Naive thymus-derived CD4-positive, alpha-beta T cell (primary cell): ENCODE measurements at regions of chr7 and their contacts with region 1.

Region 1: DNA sequence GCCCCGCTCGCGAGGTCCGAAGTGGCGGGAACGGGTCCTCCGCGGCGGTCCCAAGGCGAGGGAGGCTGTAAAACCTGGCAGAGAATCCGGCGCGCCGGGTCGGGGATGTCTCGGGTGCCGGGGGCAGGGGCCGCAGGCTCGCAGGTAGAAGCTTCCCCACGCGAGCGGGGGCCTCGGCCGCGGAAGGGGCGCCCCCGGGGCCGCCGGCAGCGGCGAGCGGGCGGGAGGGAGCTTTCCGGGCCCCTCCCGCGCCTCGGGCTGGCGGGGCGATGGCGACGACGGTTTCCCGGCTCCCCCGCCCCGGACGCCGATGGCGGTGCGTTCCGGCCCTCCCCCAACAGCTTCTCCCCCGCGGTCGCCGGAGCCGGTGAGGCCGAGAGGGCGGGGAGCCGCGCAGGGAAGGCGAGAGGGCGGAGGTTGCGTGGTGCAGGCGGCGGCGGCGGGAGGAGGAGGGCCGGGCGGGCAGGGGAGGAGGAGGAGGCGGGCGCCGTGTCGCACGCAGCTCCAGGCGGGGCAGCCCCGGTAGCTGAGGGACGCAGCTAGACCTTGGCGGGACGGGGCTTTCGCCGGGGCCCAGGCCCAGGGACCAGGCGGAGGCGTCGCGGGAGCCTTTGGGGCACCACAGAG is at the start of gene CUL1:
- DNase-seq: peak; percentile 74 to 85 (median 81)
- ATAC-seq: peak; percentile 89
- H3K4me3 ChIP-seq: peak within 1 kb of the TSS; percentile 80
- H3K4me3 Mint-ChIP-seq: peak within 1 kb of the TSS; percentile 85 to 99 (median 93)
- H3K27ac ChIP-seq: peak within 1 kb of the TSS; percentile 93
- H3K27ac Mint-ChIP-seq: peak within 1 kb of the TSS; percentile 87 to 99 (median 93)
- H3K4me1 ChIP-seq: peaks cover 27 to 29% of the 10 kb centered on the region in 2 donors
- H3K4me1 Mint-ChIP-seq: peaks cover 41 to 53% (median 52%) of the 10 kb centered on the region in 7 donors
- H3K27me3 ChIP-seq: no peaks in the 10 kb centered on the region
- H3K27me3 Mint-ChIP-seq: no peaks in the 10 kb centered on the region
- total RNA-seq, gene CUL1: 39.0 to 68.7 (median 53.6) TPM

Region 2: GRCh38 chr7:148575640-148576411 is 122.7 kb before region 1 on chr7:
- CTCF ChIA-PET with region 1: interaction called, 12 read pairs
- POLR2A ChIA-PET with region 1: interaction called, 3 read pairs
- intact Hi-C with region 1: loop called (anchors 2 kb)
- DNase-seq: peak; percentile 38 to 69 (median 56)
- ATAC-seq: peak; percentile 90
- H3K4me3 ChIP-seq: no peak overlapping the region
- H3K4me3 Mint-ChIP-seq: peak overlapping the region in 1 of 10 donors; percentile 43
- H3K27ac ChIP-seq: no peak overlapping the region
- H3K27ac Mint-ChIP-seq: no peak overlapping the region
- H3K4me1 ChIP-seq: peaks cover 0 to 4% of the 10 kb centered on the region in 2 donors
- H3K4me1 Mint-ChIP-seq: peaks cover 0 to 10% (median 4%) of the 10 kb centered on the region in 7 donors
- H3K27me3 ChIP-seq: no peaks in the 10 kb centered on the region
- H3K27me3 Mint-ChIP-seq: peaks cover 0 to 17% (median 0%) of the 10 kb centered on the region in 5 donors

Region 3: GRCh38 chr7:148662646-148663045 is 35.9 kb before region 1 on chr7:
- CTCF ChIA-PET with region 1: no interaction called
- POLR2A ChIA-PET with region 1: no interaction called
- intact Hi-C with region 1: no loop called
- DNase-seq: no peak
- ATAC-seq: no peak
- H3K4me3 ChIP-seq: no peak overlapping the region
- H3K4me3 Mint-ChIP-seq: no peak overlapping the region
- H3K27ac ChIP-seq: no peak overlapping the region
- H3K27ac Mint-ChIP-seq: peak overlapping the region in 1 of 9 donors; percentile 28
- H3K4me1 ChIP-seq: no peaks in the 10 kb centered on the region
- H3K4me1 Mint-ChIP-seq: peaks cover 0 to 9% (median 2%) of the 10 kb centered on the region in 7 donors
- H3K27me3 ChIP-seq: no peaks in the 10 kb centered on the region
- H3K27me3 Mint-ChIP-seq: peaks cover 0 to 8% (median 0%) of the 10 kb centered on the region in 5 donors

Region 4: GRCh38 chr7:148712678-148713329 is 14.3 kb after region 1 on chr7:
- CTCF ChIA-PET with region 1: interaction called, 3 read pairs
- POLR2A ChIA-PET with region 1: interaction called, 17 read pairs
- intact Hi-C with region 1: no loop called
- DNase-seq: no peak
- ATAC-seq: no peak
- H3K4me3 ChIP-seq: no peak overlapping the region
- H3K4me3 Mint-ChIP-seq: peak overlapping the region in 3 of 10 donors; percentile 28 to 72 (median 36)
- H3K27ac ChIP-seq: no peak overlapping the region
- H3K27ac Mint-ChIP-seq: no peak overlapping the region
- H3K4me1 ChIP-seq: peaks cover 8 to 26% of the 10 kb centered on the region in 2 donors
- H3K4me1 Mint-ChIP-seq: peaks cover 54 to 99% (median 91%) of the 10 kb centered on the region in 7 donors
- H3K27me3 ChIP-seq: no peaks in the 10 kb centered on the region
- H3K27me3 Mint-ChIP-seq: no peaks in the 10 kb centered on the region

Region 5: DNA sequence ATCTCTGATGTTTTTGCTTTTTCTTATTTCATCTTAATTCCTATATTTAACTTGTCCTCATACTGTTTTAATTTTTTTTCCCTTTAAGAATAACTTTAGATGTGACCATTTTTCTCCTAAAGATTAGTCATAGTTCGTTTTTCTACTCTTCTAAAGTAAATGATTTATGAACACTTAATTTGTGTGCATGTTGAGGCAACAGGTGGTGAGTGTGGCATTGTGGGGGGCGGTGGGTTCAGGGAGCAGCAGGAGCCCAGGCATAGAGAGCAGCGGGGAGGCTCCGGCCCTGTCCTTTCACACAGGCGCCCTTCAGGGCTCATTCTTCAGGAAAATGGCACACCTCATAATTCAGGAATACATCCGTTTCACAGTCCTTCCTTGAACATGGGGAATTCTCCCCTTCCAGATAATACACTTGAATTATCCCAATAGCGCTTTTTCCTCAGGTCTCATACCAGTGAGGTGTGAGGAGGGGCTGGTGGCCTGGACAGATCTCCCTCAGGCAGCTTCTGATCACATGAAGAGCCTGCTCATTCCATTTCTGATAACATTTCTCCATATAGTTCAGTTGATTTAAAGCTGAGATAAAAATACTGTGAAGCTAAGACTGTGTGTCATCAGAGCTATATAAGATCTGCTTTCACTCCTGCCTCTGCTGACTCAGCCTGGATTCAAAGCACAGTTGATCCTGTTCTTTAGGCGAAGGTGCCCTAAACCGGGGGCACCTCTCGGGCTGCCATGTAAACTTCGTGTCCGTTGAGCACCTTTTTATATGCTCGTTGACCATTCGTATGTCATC is 40.4 kb after region 1 on chr7:
- CTCF ChIA-PET with region 1: no interaction called
- POLR2A ChIA-PET with region 1: no interaction called
- intact Hi-C with region 1: loop called in 1 of 2 experiments (anchors 5 kb)
- DNase-seq: no peak
- ATAC-seq: no peak
- H3K4me3 ChIP-seq: no peak overlapping the region
- H3K4me3 Mint-ChIP-seq: no peak overlapping the region
- H3K27ac ChIP-seq: no peak overlapping the region
- H3K27ac Mint-ChIP-seq: peak overlapping the region in 2 of 9 donors; percentile 22 to 55
- H3K4me1 ChIP-seq: no peaks in the 10 kb centered on the region
- H3K4me1 Mint-ChIP-seq: peaks cover 11 to 47% (median 36%) of the 10 kb centered on the region in 7 donors
- H3K27me3 ChIP-seq: no peaks in the 10 kb centered on the region
- H3K27me3 Mint-ChIP-seq: no peaks in the 10 kb centered on the region

Region 6: GRCh38 chr7:148884299-148885022 is 186.0 kb after region 1 on chr7:
- CTCF ChIA-PET with region 1: no interaction called
- POLR2A ChIA-PET with region 1: no interaction called
- intact Hi-C with region 1: loop called (anchors 1 kb)
- DNase-seq: peak; percentile 89 to 96 (median 94)
- ATAC-seq: peak; percentile 94
- H3K4me3 ChIP-seq: peak overlapping the region; percentile 57
- H3K4me3 Mint-ChIP-seq: peak overlapping the region; percentile 85 to 98 (median 94)
- H3K27ac ChIP-seq: peak overlapping the region; percentile 97
- H3K27ac Mint-ChIP-seq: peak overlapping the region; percentile 89 to 98 (median 93)
- H3K4me1 ChIP-seq: peaks cover 6 to 7% of the 10 kb centered on the region in 2 donors
- H3K4me1 Mint-ChIP-seq: peaks cover 0 to 45% (median 29%) of the 10 kb centered on the region in 7 donors
- H3K27me3 ChIP-seq: no peaks in the 10 kb centered on the region
- H3K27me3 Mint-ChIP-seq: no peaks in the 10 kb centered on the region

Region 7: GRCh38 chr7:148987010-148987750 is 288.7 kb after region 1 on chr7:
- CTCF ChIA-PET with region 1: no interaction called
- POLR2A ChIA-PET with region 1: interaction called, 7 read pairs
- intact Hi-C with region 1: loop called (anchors 2 kb)
- DNase-seq: peak; percentile 43 to 91 (median 88)
- ATAC-seq: peak; percentile 87
- H3K4me3 ChIP-seq: peak overlapping the region; percentile 97
- H3K4me3 Mint-ChIP-seq: peak overlapping the region; percentile 92 to 99 (median 98)
- H3K27ac ChIP-seq: peak overlapping the region; percentile 85
- H3K27ac Mint-ChIP-seq: peak overlapping the region; percentile 90 to 97 (median 96)
- H3K4me1 ChIP-seq: peaks cover 26% of the 10 kb centered on the region in 2 donors
- H3K4me1 Mint-ChIP-seq: peaks cover 26 to 53% (median 48%) of the 10 kb centered on the region in 7 donors
- H3K27me3 ChIP-seq: no peaks in the 10 kb centered on the region
- H3K27me3 Mint-ChIP-seq: peaks cover 0 to 27% (median 0%) of the 10 kb centered on the region in 5 donors

Region 8: DNA sequence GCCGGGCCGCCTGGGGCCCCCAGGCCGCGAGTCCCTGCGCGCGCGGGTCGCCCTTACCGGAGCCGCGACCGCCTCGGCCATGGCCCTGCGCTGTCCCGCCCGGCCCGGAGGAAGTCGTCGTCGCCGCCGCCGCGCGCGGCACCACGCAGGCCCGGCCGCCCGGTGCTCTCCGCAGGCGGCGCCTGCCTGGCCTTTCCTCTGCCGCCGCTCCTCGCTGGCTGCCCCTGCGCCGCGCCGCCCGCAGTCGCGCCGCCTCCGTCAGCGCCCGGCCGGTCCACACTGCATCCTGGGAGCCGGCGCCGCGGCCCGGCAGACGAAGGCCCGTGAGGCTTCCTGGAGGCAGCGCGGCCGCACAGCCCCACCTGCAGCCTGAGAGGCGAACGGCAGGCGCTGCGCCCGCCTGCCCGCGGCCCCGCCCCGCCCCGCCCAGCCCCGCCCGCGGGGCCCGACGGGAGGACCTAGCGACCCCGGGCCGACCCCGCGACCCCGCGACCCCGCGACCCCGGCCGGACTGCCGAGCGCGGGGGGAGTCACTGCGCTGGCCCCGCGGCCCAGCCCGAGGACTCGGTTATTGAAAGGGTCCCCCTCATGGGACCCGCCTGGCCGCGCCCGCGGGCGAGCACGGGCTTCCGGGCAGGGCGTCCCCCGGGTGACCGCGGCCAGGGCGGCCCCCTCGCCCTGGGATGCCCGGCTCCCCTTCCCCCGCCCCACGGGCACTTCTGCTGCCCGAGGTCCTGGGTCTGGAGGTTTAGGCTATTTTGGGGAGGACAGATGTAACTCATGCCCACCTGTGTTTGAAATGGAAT is 799.1 kb after region 1 on chr7 and contains the start of gene ZNF746:
- CTCF ChIA-PET with region 1: no interaction called
- POLR2A ChIA-PET with region 1: no interaction called
- intact Hi-C with region 1: loop called in 1 of 2 experiments (anchors 5 kb)
- DNase-seq: peak; percentile 57 to 85 (median 76)
- ATAC-seq: peak; percentile 96
- H3K4me3 ChIP-seq: peak within 1 kb of the TSS; percentile 67
- H3K4me3 Mint-ChIP-seq: peak within 1 kb of the TSS; percentile 92 to 99 (median 96)
- H3K27ac ChIP-seq: peak within 1 kb of the TSS; percentile 82
- H3K27ac Mint-ChIP-seq: peak within 1 kb of the TSS; percentile 84 to 97 (median 95)
- H3K4me1 ChIP-seq: peaks cover 19 to 27% of the 10 kb centered on the region in 2 donors
- H3K4me1 Mint-ChIP-seq: peaks cover 21 to 46% (median 30%) of the 10 kb centered on the region in 7 donors
- H3K27me3 ChIP-seq: no peaks in the 10 kb centered on the region
- H3K27me3 Mint-ChIP-seq: peaks cover 0 to 3% (median 0%) of the 10 kb centered on the region in 5 donors
- total RNA-seq, gene ZNF746: 23.6 to 32.0 (median 24.4) TPM